Natural killer cell (primary cell): ENCODE measurements at regions of chr14 and their contacts with region 1.

Region 1: DNA sequence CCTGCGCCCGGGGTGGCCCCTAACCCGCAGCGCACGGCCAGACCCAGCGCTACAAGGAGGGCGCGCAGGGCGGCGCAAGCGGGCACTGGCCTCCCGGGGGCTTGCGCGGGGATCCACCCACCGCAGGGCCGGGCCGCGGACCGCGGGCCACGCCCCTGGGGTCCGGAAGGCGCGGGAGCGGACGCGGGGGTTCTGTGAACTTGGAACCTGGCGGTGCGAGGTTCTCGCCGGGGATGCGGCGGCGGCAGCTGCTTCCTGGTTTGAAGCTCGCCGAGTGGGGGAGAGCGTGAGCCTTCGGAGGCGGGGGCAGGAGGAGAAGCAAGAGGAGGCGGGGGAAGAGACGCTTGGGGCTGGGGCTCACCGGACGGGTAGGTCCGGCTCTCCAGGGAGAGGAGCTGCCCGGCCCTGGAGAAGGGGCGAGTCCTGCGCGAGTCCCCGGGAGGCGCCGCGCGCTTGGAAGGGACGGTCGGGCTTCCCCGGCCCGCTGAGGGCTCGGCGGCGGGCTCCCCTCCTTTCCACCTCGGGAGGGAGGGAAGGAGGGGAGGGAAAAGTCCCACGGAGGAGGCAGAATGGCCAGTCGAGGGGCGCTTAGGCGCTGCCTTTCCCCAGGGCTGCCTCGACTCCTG is at the start of gene PRKCH:
- DNase-seq: peak; percentile 78 to 92
- ATAC-seq: peak; percentile 76 to 85 (median 84)
- H3K4me3 ChIP-seq: peak within 1 kb of the TSS; percentile 76
- H3K4me3 Mint-ChIP-seq: peak within 1 kb of the TSS; percentile 96
- H3K27ac ChIP-seq: peak within 1 kb of the TSS; percentile 83
- H3K27ac Mint-ChIP-seq: peak within 1 kb of the TSS in 1 of 2 donors; percentile 99
- H3K4me1 ChIP-seq: peaks cover 13% of the 10 kb centered on the region
- H3K4me1 Mint-ChIP-seq: peaks cover 36 to 40% of the 10 kb centered on the region in 2 donors
- H3K27me3 ChIP-seq: no peaks in the 10 kb centered on the region
- H3K27me3 Mint-ChIP-seq: no peaks in the 10 kb centered on the region
- CTCF ChIP-seq: peak; percentile 9
- total RNA-seq, gene PRKCH: 610 to 756 (median 618) TPM

Region 2: GRCh38 chr14:61218767-61219166 is 102.7 kb before region 1 on chr14:
- intact Hi-C with region 1: no loop called
- DNase-seq: no peak
- ATAC-seq: no peak
- H3K4me3 ChIP-seq: no peak overlapping the region
- H3K4me3 Mint-ChIP-seq: no peak overlapping the region
- H3K27ac ChIP-seq: no peak overlapping the region
- H3K27ac Mint-ChIP-seq: no peak overlapping the region
- H3K4me1 ChIP-seq: no peaks in the 10 kb centered on the region
- H3K4me1 Mint-ChIP-seq: no peaks in the 10 kb centered on the region
- H3K27me3 ChIP-seq: peaks cover 7% of the 10 kb centered on the region
- H3K27me3 Mint-ChIP-seq: peaks cover 39 to 70% of the 10 kb centered on the region in 2 donors
- CTCF ChIP-seq: no peak

Region 3: GRCh38 chr14:61355892-61356325 is 34.4 kb after region 1 on chr14:
- intact Hi-C with region 1: loop called (anchors 5 kb)
- DNase-seq: peak in 1 of 2 donors; percentile 59
- ATAC-seq: peak in 1 of 3 donors; percentile 57
- H3K4me3 ChIP-seq: no peak overlapping the region
- H3K4me3 Mint-ChIP-seq: peak overlapping the region; percentile 71
- H3K27ac ChIP-seq: peak overlapping the region; percentile 51
- H3K27ac Mint-ChIP-seq: no peak overlapping the region
- H3K4me1 ChIP-seq: peaks cover 60% of the 10 kb centered on the region
- H3K4me1 Mint-ChIP-seq: peaks cover 97 to 100% of the 10 kb centered on the region in 2 donors
- H3K27me3 ChIP-seq: no peaks in the 10 kb centered on the region
- H3K27me3 Mint-ChIP-seq: no peaks in the 10 kb centered on the region
- CTCF ChIP-seq: no peak

Region 4: DNA sequence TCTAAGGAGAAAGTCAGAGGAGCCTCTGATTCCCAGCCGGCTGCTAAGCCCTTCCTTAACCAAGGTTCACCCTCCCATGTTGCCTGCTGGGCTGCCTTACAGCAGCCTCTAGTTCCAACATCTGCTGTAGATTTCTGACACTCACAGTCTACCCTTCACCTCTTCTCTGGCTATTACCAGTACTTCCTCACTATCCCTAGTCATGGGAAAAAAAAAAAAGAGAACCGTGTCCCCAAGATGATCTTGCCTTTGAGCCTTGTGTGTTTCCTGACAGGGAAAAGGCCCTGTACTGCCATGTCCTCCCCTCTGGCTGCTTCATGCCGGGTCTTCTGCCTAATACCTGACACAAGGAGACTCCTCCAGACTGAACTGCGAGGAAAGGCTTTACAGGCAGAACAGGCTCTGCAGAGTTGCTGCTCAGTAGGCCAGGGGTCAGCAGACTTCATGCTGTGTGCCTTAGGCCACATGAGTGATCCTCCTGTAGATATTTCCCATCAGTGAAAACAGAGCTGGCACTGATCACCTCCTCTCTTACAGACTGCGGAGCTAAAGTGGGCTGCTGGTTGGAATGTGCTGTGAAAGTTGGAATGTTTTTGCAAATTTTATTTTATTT is 46.7 kb after region 1 on chr14:
- intact Hi-C with region 1: loop called (anchors 1 kb)
- DNase-seq: no peak
- ATAC-seq: no peak
- H3K4me3 ChIP-seq: no peak overlapping the region
- H3K4me3 Mint-ChIP-seq: no peak overlapping the region
- H3K27ac ChIP-seq: peak overlapping the region; percentile 58
- H3K27ac Mint-ChIP-seq: no peak overlapping the region
- H3K4me1 ChIP-seq: peaks cover 64% of the 10 kb centered on the region
- H3K4me1 Mint-ChIP-seq: peaks cover 22 to 30% of the 10 kb centered on the region in 2 donors
- H3K27me3 ChIP-seq: no peaks in the 10 kb centered on the region
- H3K27me3 Mint-ChIP-seq: no peaks in the 10 kb centered on the region
- CTCF ChIP-seq: no peak

Region 5: GRCh38 chr14:61516964-61517653 is 195.6 kb after region 1 on chr14:
- intact Hi-C with region 1: loop called (anchors 5 kb)
- DNase-seq: no peak
- ATAC-seq: no peak
- H3K4me3 ChIP-seq: no peak overlapping the region
- H3K4me3 Mint-ChIP-seq: peak overlapping the region; percentile 40
- H3K27ac ChIP-seq: no peak overlapping the region
- H3K27ac Mint-ChIP-seq: peak overlapping the region in 1 of 2 donors; percentile 70
- H3K4me1 ChIP-seq: peaks cover 54% of the 10 kb centered on the region
- H3K4me1 Mint-ChIP-seq: peaks cover 87 to 88% of the 10 kb centered on the region in 2 donors
- H3K27me3 ChIP-seq: no peaks in the 10 kb centered on the region
- H3K27me3 Mint-ChIP-seq: no peaks in the 10 kb centered on the region
- CTCF ChIP-seq: no peak